ENCODE measurements at regions of chr1 and their contacts with region 1.

Region 1: GRCh38 chr1:169928438-169929209 is 34.9 kb upstream of the SCYL3 start:
- DNase-seq: peak in 1 of 2 experiments; percentile 32
- H3K4me3 ChIP-seq: no peak overlapping the region
- H3K4me3 Mint-ChIP-seq: no peak overlapping the region
- H3K27ac Mint-ChIP-seq: no peak overlapping the region
- H3K4me1 ChIP-seq: no peaks in the 10 kb centered on the region
- H3K4me1 Mint-ChIP-seq: peaks cover 5% of the 10 kb centered on the region
- H3K27me3 ChIP-seq: no peaks in the 10 kb centered on the region
- H3K27me3 Mint-ChIP-seq: no peaks in the 10 kb centered on the region
- CTCF ChIP-seq: peak; percentile 67 to 68

Region 2: DNA sequence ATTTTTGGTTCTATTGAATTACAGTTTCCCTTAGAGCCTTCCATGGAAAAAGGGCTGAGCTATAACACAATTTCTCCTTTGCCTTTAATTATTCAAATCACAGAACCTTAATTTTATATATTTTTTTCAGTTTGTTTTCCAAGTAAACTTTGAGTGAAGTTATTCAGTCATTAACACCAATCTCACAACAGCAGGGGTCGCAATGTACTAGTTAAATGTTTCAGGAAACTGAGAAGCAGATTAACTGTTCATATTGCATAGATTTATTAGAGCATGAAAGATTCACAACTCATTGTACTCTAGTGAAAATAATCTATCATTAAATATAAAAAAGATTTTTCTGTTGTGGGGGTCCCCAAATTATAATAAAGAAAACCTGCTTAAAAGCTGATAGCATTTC is 81.8 kb after region 1 on chr1:
- CTCF ChIA-PET with region 1: no interaction called
- POLR2A ChIA-PET with region 1: no interaction called
- intact Hi-C with region 1: loop called (anchors 1 kb)
- DNase-seq: peak; percentile 36 to 37
- H3K4me3 ChIP-seq: no peak overlapping the region
- H3K4me3 Mint-ChIP-seq: no peak overlapping the region
- H3K27ac Mint-ChIP-seq: no peak overlapping the region
- H3K4me1 ChIP-seq: no peaks in the 10 kb centered on the region
- H3K4me1 Mint-ChIP-seq: no peaks in the 10 kb centered on the region
- H3K27me3 ChIP-seq: no peaks in the 10 kb centered on the region
- H3K27me3 Mint-ChIP-seq: no peaks in the 10 kb centered on the region
- CTCF ChIP-seq: peak; percentile 43 to 44

Region 3: GRCh38 chr1:170074250-170075157 is 145.9 kb after region 1 on chr1 and contains the start of gene KIFAP3:
- CTCF ChIA-PET with region 1: no interaction called
- POLR2A ChIA-PET with region 1: no interaction called
- intact Hi-C with region 1: loop called (anchors 1 kb)
- DNase-seq: peak; percentile 96 to 98
- H3K4me3 ChIP-seq: peak within 1 kb of the TSS; percentile 53
- H3K4me3 Mint-ChIP-seq: peak within 1 kb of the TSS; percentile 88
- H3K27ac Mint-ChIP-seq: peak within 1 kb of the TSS; percentile 85
- H3K4me1 ChIP-seq: no peaks in the 10 kb centered on the region
- H3K4me1 Mint-ChIP-seq: peaks cover 16% of the 10 kb centered on the region
- H3K27me3 ChIP-seq: no peaks in the 10 kb centered on the region
- H3K27me3 Mint-ChIP-seq: no peaks in the 10 kb centered on the region
- CTCF ChIP-seq: peak in 1 of 2 experiments; percentile 70
- total RNA-seq, gene KIFAP3: 10.9 and 11.0 TPM in 2 replicates

Region 4: GRCh38 chr1:170461762-170462384 is 533.2 kb after region 1 on chr1:
- CTCF ChIA-PET with region 1: no interaction called
- POLR2A ChIA-PET with region 1: no interaction called
- intact Hi-C with region 1: loop called (anchors 1 kb)
- DNase-seq: no peak
- H3K4me3 ChIP-seq: no peak overlapping the region
- H3K4me3 Mint-ChIP-seq: no peak overlapping the region
- H3K27ac Mint-ChIP-seq: no peak overlapping the region
- H3K4me1 ChIP-seq: no peaks in the 10 kb centered on the region
- H3K4me1 Mint-ChIP-seq: peaks cover 8% of the 10 kb centered on the region
- H3K27me3 ChIP-seq: no peaks in the 10 kb centered on the region
- H3K27me3 Mint-ChIP-seq: peaks cover 9% of the 10 kb centered on the region
- CTCF ChIP-seq: no peak

Region 5: GRCh38 chr1:170765712-170766330 is 837.2 kb after region 1 on chr1:
- CTCF ChIA-PET with region 1: no interaction called
- POLR2A ChIA-PET with region 1: no interaction called
- intact Hi-C with region 1: loop called (anchors 1 kb)
- DNase-seq: no peak
- H3K4me3 ChIP-seq: no peak overlapping the region
- H3K4me3 Mint-ChIP-seq: no peak overlapping the region
- H3K27ac Mint-ChIP-seq: no peak overlapping the region
- H3K4me1 ChIP-seq: no peaks in the 10 kb centered on the region
- H3K4me1 Mint-ChIP-seq: no peaks in the 10 kb centered on the region
- H3K27me3 ChIP-seq: no peaks in the 10 kb centered on the region
- H3K27me3 Mint-ChIP-seq: peaks cover 3% of the 10 kb centered on the region
- CTCF ChIP-seq: peak in 1 of 2 experiments; percentile 42

Region 6: DNA sequence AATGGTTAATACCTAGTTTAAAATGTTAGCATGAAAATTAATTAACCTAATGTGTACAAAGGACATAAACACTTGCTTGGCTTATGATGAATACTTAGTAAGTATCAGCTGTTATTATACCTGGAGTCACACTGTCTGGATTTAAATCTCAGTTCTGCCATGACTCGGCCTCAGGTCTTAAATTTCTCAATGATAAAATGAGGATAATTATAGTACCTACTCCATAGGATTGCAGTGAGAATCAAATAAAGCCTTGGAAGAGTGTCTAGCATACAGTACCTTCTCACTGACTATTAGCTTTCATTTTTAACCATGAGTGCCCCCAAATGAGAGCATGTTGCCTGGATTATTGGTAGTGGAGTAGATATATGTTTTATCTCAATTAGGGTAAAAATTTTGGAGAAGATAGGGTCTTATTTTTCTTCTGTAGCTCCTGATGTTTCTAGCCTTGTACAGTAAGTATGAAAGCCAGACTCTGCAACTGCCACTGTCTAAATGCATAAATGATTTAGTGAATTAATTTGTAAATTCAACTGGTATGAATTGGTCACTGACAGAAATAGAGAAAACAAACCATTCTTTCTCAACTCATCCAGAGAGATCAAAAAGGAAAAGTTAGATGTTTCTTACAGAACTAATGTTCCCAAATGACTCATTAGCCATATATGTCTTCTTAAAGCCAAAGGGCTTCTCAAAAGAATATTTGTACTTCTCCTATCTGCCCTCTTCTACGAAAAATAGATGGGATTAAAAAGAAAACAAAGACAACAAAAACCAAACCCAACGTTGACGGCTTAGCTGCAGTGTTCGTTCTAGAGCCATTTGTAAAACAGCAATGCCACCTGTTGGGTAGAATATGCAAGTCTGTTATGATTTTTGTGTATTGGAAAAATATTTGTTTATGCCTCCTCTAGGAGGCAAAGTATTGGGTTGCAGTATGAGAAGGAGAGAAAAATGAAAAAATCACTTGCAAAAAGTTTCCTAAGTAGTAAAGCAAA is 952.9 kb after region 1 on chr1:
- CTCF ChIA-PET with region 1: no interaction called
- POLR2A ChIA-PET with region 1: no interaction called
- intact Hi-C with region 1: loop called (anchors 2 kb)
- DNase-seq: peak in 1 of 2 experiments; percentile 13
- H3K4me3 ChIP-seq: no peak overlapping the region
- H3K4me3 Mint-ChIP-seq: no peak overlapping the region
- H3K27ac Mint-ChIP-seq: no peak overlapping the region
- H3K4me1 ChIP-seq: peaks cover 8% of the 10 kb centered on the region
- H3K4me1 Mint-ChIP-seq: no peaks in the 10 kb centered on the region
- H3K27me3 ChIP-seq: no peaks in the 10 kb centered on the region
- H3K27me3 Mint-ChIP-seq: peaks cover 2% of the 10 kb centered on the region
- CTCF ChIP-seq: peak; percentile 30 to 36

Region 7: GRCh38 chr1:170929835-170930554 is 1001.4 kb after region 1 on chr1:
- CTCF ChIA-PET with region 1: no interaction called
- POLR2A ChIA-PET with region 1: no interaction called
- intact Hi-C with region 1: loop called (anchors 1 kb)
- DNase-seq: peak in 1 of 2 experiments; percentile 50
- H3K4me3 ChIP-seq: no peak overlapping the region
- H3K4me3 Mint-ChIP-seq: no peak overlapping the region
- H3K27ac Mint-ChIP-seq: no peak overlapping the region
- H3K4me1 ChIP-seq: no peaks in the 10 kb centered on the region
- H3K4me1 Mint-ChIP-seq: no peaks in the 10 kb centered on the region
- H3K27me3 ChIP-seq: no peaks in the 10 kb centered on the region
- H3K27me3 Mint-ChIP-seq: no peaks in the 10 kb centered on the region
- CTCF ChIP-seq: peak; percentile 55 to 74

Measured in Caco-2 (cell line).